OCI-LY7 (cell line): ENCODE measurements at regions of chr3 and their contacts with region 1.

Region 1: DNA sequence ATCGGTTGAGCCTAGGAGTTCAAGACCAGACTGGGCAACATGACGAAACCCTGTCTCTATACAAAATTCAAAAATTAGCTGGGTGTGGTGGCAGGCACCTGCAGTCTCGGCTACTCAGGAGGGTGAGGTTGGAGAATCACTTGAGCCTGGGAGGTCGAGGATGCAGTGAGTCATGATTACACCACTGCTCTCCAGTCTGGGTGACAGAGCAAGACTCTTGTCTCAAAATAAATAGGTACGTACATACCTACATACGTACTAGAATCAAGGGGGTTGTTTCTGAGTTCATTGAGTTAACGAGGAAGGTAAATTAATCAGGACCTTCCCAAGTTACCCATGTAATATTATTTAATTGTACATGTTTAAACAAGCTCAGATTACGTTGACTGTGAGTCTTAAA is 97.5 kb downstream of the CHL1 start:
- DNase-seq: no peak
- H3K4me3 ChIP-seq: no peak overlapping the region
- H3K27ac ChIP-seq: no peak overlapping the region
- H3K4me1 ChIP-seq: peaks cover 11% of the 10 kb centered on the region
- CTCF ChIP-seq: no peak

Region 2: DNA sequence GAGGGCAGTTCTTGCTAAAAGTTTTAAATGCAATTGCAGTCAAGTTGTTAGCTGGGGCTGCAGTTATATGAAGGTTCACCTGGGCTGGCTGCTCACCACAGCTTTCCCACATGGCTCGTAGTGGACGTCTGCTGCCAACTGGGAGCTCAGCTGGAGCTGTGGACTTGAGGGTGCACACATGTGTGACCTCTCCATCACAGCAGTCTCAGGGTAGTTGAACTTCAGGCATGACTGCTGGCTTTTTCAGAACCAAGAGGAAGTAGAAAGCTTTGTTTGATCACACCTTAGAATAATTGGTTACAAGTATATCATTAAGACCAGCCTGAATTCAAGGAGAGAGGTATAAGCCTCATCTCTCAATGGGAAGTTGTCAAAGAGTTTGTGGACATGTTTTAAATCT is 23.4 kb before region 1 on chr3:
- CTCF ChIA-PET with region 1: interaction called, 3 read pairs
- POLR2A ChIA-PET with region 1: interaction called, 18 read pairs
- intact Hi-C with region 1: no loop called
- DNase-seq: peak; percentile 37
- H3K4me3 ChIP-seq: no peak overlapping the region
- H3K27ac ChIP-seq: no peak overlapping the region
- H3K4me1 ChIP-seq: peaks cover 21% of the 10 kb centered on the region
- CTCF ChIP-seq: no peak

Region 3: DNA sequence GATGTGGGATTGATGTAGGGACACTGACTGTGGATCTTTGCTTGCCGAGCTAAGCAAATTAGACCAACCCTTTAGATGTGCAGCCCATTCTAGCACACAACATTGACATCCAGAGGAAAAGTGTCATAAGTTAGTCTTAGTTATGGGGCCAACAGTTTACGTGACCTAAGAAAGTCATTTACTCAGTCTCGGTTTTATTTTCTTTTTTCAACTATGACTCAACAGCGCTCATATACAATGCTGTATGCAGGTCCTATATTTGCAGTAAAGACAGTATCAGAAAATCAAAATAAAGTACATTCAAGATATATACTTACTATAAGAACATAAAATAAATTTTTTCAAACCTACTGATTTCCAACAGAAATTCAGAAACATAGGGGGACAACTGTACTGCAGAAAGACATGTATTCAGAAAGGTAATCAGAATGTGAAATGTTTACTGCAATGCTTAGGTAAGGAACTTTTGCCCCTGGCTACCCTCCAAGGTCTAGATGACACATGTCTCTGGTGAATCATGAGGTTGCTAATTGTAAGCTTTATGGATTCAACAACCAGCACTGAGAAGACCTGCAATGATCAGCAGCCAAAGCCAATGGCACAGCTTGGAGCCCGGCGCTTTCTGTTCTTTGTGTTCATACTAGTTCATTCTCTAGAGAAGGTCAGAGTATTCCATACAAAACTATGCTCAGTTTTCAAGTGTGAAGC is 481.2 kb after region 1 on chr3:
- CTCF ChIA-PET with region 1: no interaction called
- POLR2A ChIA-PET with region 1: no interaction called
- intact Hi-C with region 1: no loop called
- DNase-seq: no peak
- H3K4me3 ChIP-seq: no peak overlapping the region
- H3K27ac ChIP-seq: no peak overlapping the region
- H3K4me1 ChIP-seq: no peaks in the 10 kb centered on the region
- CTCF ChIP-seq: no peak